Ovary (tissue), 10 donors: ENCODE measurements at regions of chr16 and their contacts with region 1.

Region 1: GRCh38 chr16:58025351-58026138 is at the start of gene MMP15:
- DNase-seq: peak; percentile 30 to 71 (median 56)
- H3K4me3 ChIP-seq: peak within 1 kb of the TSS; percentile 56
- H3K27ac ChIP-seq: peak within 1 kb of the TSS in 1 of 2 donors; percentile 40
- H3K4me1 ChIP-seq: peaks cover 11% of the 10 kb centered on the region
- H3K27me3 ChIP-seq: no peaks in the 10 kb centered on the region
- CTCF ChIP-seq: no peak
- EP300 ChIP-seq: no peak
- POLR2A ChIP-seq: no peak
- total RNA-seq, gene MMP15: 0.86 to 6.7 (median 2.6) TPM

Region 2: DNA sequence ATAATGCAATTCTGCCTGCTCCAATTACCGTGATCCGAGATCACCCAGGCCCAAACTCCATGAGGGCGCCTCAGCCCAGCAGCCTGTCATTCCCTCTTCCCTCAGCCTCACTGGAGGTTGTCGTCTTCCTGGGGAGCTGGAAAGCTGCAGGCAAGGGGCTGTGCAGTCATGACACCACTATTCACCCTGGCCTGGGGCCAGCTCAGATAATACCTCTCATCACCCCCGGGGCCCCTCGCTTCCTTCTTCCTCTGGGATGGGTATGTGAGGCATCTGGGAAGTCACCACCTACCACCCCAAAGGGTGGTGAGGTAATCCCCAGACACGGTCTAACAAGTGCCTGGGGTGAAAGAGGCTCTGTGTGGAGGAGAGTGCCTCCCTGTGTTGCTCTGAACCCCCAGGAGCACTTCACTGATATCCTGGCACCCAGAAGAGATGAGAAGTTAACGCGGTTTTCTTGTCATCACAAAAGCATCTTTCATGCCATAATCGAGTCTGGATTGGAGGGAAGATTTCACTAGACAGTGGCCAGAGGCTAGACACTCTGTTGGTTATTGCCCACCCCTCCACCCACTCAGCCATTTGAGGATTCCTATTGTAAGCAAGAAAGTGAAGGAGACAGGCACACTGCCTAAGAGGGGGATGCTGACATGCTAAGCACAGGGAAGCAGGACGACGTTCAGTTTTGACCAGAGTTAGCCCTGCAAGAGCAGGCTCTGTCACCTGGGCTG is 85.2 kb after region 1 on chr16:
- intact Hi-C with region 1: loop called in 1 of 4 experiments (anchors 5 kb)
- DNase-seq: no peak
- H3K4me3 ChIP-seq: no peak overlapping the region
- H3K27ac ChIP-seq: no peak overlapping the region
- H3K4me1 ChIP-seq: peaks cover 3% of the 10 kb centered on the region
- H3K27me3 ChIP-seq: no peaks in the 10 kb centered on the region
- CTCF ChIP-seq: no peak
- EP300 ChIP-seq: no peak
- POLR2A ChIP-seq: no peak

Region 3: DNA sequence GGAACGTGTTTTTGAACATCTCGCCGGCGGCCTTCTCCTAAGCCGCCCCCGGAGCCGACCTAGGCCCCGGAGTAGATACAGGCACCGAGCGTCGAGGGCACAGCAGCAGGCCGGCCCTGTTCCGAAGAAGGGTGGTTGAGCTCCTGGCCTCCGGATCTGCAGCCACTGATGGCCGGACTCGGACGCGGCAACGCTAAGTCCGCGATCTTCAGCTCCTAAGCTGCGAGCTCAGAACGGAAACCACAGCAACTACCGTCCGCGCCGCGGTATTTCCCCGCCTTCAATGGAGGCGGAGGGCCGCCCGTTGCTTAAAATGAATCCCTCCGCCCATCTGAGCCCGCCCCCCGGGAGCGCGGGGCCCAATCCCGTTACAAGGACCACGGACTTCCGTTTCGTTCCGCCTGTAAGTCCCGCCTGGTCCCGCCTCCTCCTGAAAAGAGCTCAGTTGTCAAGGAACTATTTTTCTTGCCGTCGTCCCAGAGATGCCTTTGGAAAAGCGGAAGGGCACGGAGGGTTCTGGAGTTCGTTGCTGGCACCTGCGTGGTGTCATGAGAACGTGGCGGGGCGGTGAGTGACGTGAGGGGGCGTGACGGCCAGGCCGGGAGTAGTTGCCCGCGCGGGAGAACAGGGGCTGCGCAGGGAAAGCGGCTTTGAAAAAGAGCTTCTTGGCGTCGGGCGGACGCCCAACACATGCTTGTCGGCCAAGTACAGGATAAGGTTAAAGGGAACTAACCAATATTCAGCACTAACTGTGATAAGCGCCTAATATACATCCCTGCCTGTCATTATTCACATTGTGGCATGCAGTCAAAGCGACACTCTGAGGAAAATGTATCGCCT is 103.8 kb after region 1 on chr16 and contains the start of gene CFAP20:
- intact Hi-C with region 1: loop called (anchors 5 kb)
- DNase-seq: peak; percentile 97 to 99 (median 98)
- H3K4me3 ChIP-seq: peak within 1 kb of the TSS; percentile 77
- H3K27ac ChIP-seq: peak within 1 kb of the TSS; percentile 11 to 71
- H3K4me1 ChIP-seq: peaks cover 9% of the 10 kb centered on the region
- H3K27me3 ChIP-seq: no peaks in the 10 kb centered on the region
- CTCF ChIP-seq: no peak
- EP300 ChIP-seq: no peak
- POLR2A ChIP-seq: peak; percentile 86
- total RNA-seq, gene CFAP20: 20.5 to 38.9 (median 30.0) TPM

Region 4: DNA sequence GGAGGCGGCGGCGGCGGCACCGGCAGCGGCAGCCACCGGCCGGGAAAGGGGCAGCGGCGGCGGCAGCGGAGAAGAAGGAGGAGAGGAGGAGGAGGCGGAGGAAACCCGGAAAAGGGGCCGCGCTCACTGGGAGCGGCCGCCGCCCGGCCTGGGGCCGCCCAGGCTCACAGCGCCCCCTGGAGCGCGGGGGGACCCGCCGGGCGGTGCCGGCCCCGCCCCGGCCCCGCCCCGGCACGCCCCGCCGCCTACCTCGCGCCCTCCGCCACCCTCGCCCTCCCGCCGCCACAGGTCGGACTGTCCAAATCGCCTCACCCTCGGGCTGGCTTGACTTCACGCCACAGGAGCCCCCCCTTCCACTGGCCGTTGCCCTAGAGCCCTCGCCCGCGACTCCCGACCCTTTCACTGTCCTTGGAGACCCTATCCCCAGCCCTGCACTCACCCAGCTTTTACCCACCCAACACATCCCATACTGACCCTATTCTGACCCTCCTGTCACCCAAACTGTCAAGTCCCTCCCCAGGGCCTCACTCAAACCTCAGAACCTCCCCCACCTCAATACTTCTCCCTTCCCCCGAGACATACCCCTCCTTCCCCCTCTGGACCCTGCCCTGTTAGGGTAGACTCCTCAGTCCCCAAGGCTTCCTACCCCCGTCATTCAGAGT is 172.6 kb after region 1 on chr16 and contains the start of gene CSNK2A2:
- intact Hi-C with region 1: loop called in 2 of 4 experiments (anchors 10 kb)
- DNase-seq: peak; percentile 54 to 81 (median 68)
- H3K4me3 ChIP-seq: peak within 1 kb of the TSS; percentile 85
- H3K27ac ChIP-seq: peak within 1 kb of the TSS in 1 of 2 donors; percentile 1
- H3K4me1 ChIP-seq: peaks cover 5% of the 10 kb centered on the region
- H3K27me3 ChIP-seq: no peaks in the 10 kb centered on the region
- CTCF ChIP-seq: no peak
- EP300 ChIP-seq: no peak
- POLR2A ChIP-seq: no peak
- total RNA-seq, gene CSNK2A2: 23.1 to 63.3 (median 58.1) TPM

Region 5: DNA sequence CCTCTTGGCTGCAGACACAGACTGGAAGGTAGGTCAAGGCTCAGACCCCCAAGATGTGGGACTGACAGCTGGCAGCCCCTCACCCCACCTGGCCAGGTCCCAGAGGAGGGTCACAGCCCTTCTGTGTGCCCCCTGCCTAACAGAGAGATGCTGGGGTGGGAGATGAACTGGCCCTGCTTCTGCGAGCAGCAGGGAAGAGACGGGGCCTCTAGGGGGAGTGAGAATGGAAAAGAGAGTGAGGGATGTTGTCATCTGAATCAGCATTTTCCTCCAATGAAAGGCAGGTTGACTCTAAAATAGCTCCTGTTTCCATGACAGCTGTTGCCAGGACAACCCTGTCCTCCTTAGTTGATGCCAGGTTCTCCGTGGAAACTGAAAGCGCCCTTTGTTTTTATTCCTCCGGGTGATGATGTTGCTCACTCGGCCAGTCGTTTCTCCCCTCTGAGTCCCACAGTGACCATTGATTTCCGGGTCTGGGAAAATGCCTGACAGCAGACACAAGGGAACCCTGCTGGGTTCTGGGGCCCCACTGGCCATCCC is 469.5 kb after region 1 on chr16:
- intact Hi-C with region 1: loop called in 1 of 4 experiments (anchors 10 kb)
- DNase-seq: peak; percentile 42 to 80 (median 59)
- H3K4me3 ChIP-seq: no peak overlapping the region
- H3K27ac ChIP-seq: no peak overlapping the region
- H3K4me1 ChIP-seq: peaks cover 2% of the 10 kb centered on the region
- H3K27me3 ChIP-seq: no peaks in the 10 kb centered on the region
- CTCF ChIP-seq: no peak
- EP300 ChIP-seq: no peak
- POLR2A ChIP-seq: no peak